Astrocyte of the cerebellum (primary cell): ENCODE measurements at regions of chr1 and their contacts with region 1.

Region 1: DNA sequence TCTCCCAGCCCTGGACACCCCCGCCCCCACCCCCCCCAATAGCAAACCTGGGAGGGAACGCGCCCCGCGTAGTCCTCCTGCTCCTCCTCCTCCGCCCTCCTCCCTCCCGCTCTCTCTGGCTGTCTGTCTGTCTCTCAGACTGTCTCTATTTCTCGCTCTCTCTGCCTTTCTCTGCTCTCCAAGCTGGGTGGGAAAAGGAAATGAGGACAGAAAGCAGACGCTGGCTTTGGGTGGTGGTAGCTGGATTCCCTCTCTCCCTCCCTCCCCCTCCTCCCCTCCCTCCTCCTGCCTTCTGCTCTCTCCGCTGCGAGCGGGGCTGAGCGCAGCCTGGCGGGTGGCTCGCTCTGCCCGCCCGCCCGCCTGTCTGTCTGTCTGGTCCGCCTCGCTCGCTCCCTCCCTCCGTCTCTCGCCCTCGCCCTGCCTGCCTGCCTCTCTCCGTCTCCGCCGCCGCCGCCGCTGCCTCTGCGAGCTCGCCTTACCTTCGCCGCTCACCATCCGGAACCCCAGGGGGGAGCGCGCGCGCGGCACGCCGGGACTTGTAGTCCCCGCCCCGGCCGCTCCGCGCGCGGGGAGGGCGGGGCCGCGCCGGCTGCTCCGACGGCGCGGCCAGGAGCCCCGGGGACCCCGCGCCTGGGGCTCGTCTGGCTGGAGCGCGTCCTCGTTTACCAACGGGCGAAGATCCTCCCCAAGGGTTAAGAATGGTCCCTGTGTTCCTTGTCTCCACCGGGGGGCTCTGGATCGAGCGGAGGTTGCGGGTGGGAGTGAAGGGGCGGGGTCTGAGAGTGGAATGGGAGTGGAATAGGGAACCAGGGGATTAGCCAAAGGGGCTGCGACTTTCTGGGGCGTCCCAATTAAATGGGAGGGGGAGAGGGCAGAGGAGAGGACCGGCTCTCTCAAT is at the start of gene AHDC1:
- DNase-seq: peak; percentile 73
- H3K4me3 ChIP-seq: peak within 1 kb of the TSS; percentile 87
- CTCF ChIP-seq: no peak

Region 2: GRCh38 chr1:27402349-27402754 is 201.6 kb before region 1 on chr1:
- in situ Hi-C with region 1: loop called (anchors 5 kb)
- DNase-seq: no peak
- H3K4me3 ChIP-seq: no peak overlapping the region
- CTCF ChIP-seq: peak; percentile 63

Region 3: DNA sequence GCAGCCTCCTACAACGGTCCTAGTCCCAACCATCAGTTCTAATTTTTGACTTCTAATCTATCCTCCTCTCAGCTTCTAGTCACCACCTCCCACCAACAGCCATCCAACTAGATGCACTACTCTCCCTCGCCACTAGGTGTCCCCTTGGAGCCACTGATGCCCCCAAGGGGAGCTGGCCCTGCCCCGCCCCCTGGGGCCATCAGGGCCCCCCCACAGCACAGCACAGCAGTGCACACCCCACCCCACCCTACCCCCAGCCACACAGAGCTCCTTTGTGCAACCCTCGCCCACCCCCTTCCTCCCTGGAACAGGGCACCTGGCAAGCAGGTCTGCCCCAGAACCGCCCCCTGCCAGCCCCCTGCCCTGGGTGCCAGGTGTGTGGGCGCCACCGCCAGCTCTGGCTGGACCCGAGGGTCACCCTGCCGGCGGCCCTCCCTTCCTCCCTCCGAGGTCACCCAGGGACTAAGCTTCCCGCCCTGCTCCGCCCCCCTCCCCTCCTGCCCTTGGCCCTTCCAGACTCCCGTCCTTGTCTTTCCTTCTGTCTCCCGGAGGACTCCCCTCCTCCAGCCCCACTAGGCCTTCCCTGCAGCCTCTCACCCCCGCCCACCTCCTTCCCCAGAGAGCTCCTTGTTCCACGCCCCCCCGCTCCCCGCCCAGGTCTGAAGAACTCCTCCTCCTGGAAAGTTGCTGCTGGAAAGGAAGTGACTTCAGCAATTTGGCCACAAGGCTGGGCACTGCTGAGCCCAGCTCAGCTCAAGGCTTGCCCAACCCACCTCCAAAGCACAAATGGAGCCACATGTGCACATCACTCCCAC is 46.9 kb before region 1 on chr1:
- in situ Hi-C with region 1: loop called (anchors 10 kb)
- DNase-seq: peak; percentile 83
- H3K4me3 ChIP-seq: no peak overlapping the region
- CTCF ChIP-seq: peak; percentile 87

Region 4: GRCh38 chr1:27752360-27752759 is 148.4 kb after region 1 on chr1:
- in situ Hi-C with region 1: no loop called
- DNase-seq: no peak
- H3K4me3 ChIP-seq: no peak overlapping the region
- CTCF ChIP-seq: no peak